A673 (cell line): ENCODE measurements at regions of chr15 and their contacts with region 1.

Region 1: DNA sequence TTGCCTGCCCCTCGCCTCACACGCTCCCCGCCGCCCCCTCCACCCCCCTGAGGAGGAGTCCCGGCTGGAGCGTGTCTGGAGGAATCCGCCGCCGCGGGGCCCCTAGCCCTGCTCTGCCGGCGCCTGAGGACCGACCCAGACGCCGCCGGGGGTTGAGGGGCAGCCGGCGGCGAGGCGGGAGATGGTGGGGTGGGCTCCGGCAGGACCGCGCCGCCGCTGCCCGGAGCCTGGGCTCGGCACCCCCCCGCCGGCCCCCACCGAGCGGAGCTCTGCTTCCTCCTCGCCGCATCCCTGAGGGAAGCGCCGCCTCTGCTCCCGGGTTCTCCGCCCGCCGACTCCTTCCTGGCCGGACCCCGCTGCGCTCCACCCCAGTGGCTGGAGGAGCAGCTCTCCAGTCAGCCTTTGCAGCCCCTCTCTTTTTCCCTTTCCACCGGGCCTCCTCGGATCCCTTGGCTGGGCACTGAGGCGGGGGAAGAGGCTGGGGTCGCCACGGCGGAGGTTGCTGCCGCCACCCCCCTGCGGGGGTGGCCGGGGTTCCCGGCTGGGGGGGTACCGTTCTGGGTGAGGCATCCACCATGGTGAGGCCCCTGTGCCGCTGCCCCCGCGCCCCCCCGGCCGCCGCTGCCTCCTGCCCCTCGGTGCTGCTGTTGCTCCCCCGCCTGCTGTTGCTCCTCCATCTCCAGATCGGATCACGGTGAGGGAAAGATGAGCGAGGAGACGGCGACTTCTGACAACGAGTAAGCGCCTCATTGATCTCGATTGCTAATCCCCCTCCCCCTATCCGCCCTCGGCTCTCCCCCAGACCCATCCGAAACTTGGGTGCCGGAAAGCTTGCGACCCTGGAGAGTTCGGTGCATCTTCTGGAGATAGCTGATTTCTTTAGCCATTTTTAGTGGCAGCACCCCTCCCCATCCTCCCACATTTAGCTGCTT is at the start of gene SPRED1:
- DNase-seq: peak; percentile 81
- H3K4me3 ChIP-seq: peak within 1 kb of the TSS; percentile 91
- H3K27ac ChIP-seq: peak within 1 kb of the TSS; percentile 98
- H3K4me1 ChIP-seq: peaks cover 34% of the 10 kb centered on the region
- H3K27me3 ChIP-seq: peaks cover 6% of the 10 kb centered on the region
- CTCF ChIP-seq: no peak
- total RNA-seq, gene SPRED1: 14.2 and 17.3 TPM in 2 replicates

Region 2: DNA sequence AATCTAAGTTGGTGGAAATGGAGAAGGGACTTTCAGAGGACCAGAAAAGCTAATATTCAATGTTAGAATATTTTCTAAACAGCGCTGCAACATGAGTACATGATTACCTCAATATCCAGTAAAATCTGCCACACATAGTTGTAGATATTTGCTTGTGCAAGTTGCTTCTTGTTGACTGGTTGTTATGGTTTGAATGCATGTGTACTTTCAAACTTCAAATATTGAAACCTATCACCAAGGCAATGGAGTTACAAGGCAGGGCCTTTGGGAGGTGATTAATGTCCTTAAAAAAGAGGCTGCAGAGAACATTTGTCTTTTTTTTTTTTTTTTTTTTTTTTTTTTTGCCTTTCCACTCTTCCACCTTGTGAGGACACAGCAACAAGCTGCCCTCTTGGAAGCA is 268.4 kb before region 1 on chr15:
- CTCF ChIA-PET with region 1: no interaction called
- POLR2A ChIA-PET with region 1: no interaction called
- intact Hi-C with region 1: no loop called
- DNase-seq: no peak
- H3K4me3 ChIP-seq: no peak overlapping the region
- H3K27ac ChIP-seq: no peak overlapping the region
- H3K4me1 ChIP-seq: no peaks in the 10 kb centered on the region
- H3K27me3 ChIP-seq: peaks cover 4% of the 10 kb centered on the region
- CTCF ChIP-seq: no peak

Region 3: GRCh38 chr15:38300395-38300794 is 47.6 kb after region 1 on chr15:
- CTCF ChIA-PET with region 1: no interaction called
- POLR2A ChIA-PET with region 1: no interaction called
- intact Hi-C with region 1: loop called (anchors 5 kb)
- DNase-seq: peak; percentile 12
- H3K4me3 ChIP-seq: no peak overlapping the region
- H3K27ac ChIP-seq: no peak overlapping the region
- H3K4me1 ChIP-seq: peaks cover 44% of the 10 kb centered on the region
- H3K27me3 ChIP-seq: no peaks in the 10 kb centered on the region
- CTCF ChIP-seq: no peak